ENCODE measurements at regions of chr12 and their contacts with region 1.

Region 1: DNA sequence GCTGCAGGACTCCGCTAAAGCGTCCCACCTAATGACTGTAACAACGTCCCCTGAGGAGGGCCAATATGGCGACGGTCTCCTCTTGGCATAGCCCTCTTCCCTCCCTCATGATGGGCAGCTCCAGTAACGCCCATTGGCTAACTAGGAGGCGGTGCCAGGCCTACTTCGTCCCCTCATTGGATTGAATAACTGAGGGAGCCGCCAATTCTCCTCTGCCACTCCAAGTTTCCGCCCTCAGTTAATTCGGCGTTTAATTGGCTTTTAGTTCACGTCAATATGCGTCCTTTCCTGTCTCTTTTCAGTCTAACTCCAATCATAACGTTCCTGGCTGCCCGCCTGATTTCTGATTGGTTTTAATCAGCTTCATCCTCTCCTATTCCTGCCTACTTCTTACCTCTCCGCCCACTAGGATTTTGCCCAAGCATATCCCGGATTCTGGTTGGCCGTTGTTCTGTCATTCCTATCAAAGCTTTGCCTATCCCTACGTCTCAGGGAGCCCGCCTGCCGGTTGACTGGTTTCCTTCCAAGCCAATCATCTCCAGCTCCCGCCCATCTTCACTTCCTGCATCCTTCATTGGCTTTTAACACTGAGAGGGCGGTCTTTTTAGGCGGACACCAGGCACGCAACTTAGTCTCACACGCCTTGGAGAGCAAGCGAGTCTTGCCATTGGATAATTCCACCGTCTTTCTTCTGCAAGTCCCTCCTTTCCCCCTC is 430 bp upstream of the SP1 start:
- DNase-seq: peak; percentile 80
- ATAC-seq: peak; percentile 78
- H3K4me3 Mint-ChIP-seq: no peak overlapping the region
- H3K27ac Mint-ChIP-seq: no peak overlapping the region
- H3K4me1 Mint-ChIP-seq: peaks cover 30% of the 10 kb centered on the region
- H3K27me3 Mint-ChIP-seq: no peaks in the 10 kb centered on the region

Region 2: GRCh38 chr12:53321074-53321814 is 58.3 kb before region 1 on chr12 and contains the start of gene AAAS:
- POLR2A ChIA-PET with region 1: interaction called, 16 read pairs
- DNase-seq: peak; percentile 95
- ATAC-seq: peak; percentile 82
- H3K4me3 Mint-ChIP-seq: peak within 1 kb of the TSS; percentile 100
- H3K27ac Mint-ChIP-seq: peak within 1 kb of the TSS; percentile 99
- H3K4me1 Mint-ChIP-seq: peaks cover 22% of the 10 kb centered on the region
- H3K27me3 Mint-ChIP-seq: peaks cover 3% of the 10 kb centered on the region
- total RNA-seq, gene AAAS: 65.0 to 67.0 TPM

Region 3: DNA sequence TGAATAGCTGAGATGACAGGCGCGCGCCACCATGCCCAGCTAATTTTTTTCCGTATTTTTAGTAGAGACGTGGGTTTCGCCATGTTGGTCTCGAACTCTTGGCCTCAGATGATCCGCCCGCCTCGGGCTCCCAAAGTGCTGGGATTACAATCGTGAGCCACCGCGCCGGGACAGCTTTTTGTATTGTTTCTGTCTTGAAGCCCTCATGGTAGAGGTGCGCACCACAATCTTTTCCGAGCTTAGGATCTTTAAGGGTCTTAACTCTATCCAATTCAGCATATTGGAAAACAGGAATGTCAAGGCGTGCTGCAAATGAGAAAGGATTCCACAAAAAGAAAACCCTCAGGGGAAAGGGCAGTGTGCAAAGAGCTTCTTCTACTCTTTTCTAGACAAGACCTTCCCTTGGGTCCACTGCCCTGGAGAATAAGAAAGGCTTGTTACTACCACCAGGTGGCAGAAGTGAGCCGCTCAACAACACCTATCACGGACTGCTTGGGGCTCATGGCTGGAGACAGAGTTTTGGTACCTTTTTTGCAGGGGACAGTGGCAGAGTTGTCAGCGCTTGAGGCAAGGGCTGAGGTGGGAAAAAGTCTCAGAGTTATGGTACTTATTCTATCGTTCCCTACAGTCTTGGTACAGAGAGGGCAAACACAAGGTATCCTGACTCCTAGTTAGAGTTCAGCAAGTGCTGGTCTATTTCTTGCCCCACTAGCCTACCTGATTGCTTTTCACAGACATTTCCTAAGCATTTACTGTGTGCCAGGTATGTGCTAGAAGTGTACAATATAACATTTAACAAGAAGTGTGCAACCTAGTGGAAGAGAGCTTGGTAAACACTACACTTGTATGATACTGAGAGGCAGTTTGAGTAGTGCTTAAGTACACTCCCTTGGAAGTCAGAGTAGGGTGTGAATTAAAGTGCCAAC is 27.0 kb before region 1 on chr12:
- POLR2A ChIA-PET with region 1: interaction called, 15 read pairs
- DNase-seq: peak; percentile 73
- ATAC-seq: peak; percentile 99
- H3K4me3 Mint-ChIP-seq: no peak overlapping the region
- H3K27ac Mint-ChIP-seq: peak overlapping the region; percentile 64
- H3K4me1 Mint-ChIP-seq: peaks cover 11% of the 10 kb centered on the region
- H3K27me3 Mint-ChIP-seq: no peaks in the 10 kb centered on the region

Region 4: DNA sequence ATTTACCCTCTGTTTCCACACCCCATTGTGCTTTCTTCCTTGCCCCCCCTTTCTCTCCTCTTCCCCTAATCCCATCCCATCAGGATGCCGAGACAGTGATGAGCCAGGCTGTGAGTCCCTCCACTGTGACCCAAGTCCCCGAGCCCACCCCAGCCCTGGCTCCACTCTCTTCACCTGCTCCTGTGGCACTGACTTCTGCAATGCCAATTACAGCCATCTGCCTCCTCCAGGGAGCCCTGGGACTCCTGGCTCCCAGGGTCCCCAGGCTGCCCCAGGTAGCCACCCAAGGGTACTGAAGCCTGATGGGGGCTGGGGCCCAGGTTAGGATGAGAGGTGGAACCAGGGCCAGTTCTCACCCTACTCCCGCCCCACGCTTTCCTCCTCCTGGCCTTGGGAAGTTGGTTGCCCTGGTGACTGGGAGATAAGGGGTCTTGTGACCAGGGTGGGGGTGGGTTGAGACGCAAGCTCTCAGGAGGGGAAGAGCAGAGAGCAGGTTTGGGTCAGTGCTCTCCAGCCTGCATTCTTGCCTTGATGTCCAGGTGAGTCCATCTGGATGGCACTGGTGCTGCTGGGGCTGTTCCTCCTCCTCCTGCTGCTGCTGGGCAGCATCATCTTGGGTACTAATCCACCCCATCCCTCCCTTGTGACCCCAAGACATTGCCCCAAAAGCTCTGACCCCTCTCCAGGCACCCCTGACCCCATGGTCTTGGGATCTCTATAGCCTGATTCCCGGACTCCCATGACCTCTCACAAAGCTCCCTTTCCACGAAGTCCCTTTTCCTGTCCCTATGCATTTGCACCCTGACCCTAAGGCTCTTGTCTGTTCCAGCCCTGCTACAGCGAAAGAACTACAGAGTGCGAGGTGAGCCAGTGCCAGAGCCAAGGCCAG is 45.3 kb after region 1 on chr12:
- POLR2A ChIA-PET with region 1: interaction called, 11 read pairs
- DNase-seq: no peak
- ATAC-seq: no peak
- H3K4me3 Mint-ChIP-seq: no peak overlapping the region
- H3K27ac Mint-ChIP-seq: no peak overlapping the region
- H3K4me1 Mint-ChIP-seq: peaks cover 4% of the 10 kb centered on the region
- H3K27me3 Mint-ChIP-seq: no peaks in the 10 kb centered on the region

Region 5: GRCh38 chr12:53441040-53441833 is 61.7 kb after region 1 on chr12 and contains the start of gene PRR13:
- POLR2A ChIA-PET with region 1: interaction called, 10 read pairs
- DNase-seq: peak; percentile 95
- ATAC-seq: peak; percentile 99
- H3K4me3 Mint-ChIP-seq: peak within 1 kb of the TSS; percentile 99
- H3K27ac Mint-ChIP-seq: peak within 1 kb of the TSS; percentile 91
- H3K4me1 Mint-ChIP-seq: peaks cover 29% of the 10 kb centered on the region
- H3K27me3 Mint-ChIP-seq: no peaks in the 10 kb centered on the region
- total RNA-seq, gene PRR13: 218 to 231 TPM

Region 6: DNA sequence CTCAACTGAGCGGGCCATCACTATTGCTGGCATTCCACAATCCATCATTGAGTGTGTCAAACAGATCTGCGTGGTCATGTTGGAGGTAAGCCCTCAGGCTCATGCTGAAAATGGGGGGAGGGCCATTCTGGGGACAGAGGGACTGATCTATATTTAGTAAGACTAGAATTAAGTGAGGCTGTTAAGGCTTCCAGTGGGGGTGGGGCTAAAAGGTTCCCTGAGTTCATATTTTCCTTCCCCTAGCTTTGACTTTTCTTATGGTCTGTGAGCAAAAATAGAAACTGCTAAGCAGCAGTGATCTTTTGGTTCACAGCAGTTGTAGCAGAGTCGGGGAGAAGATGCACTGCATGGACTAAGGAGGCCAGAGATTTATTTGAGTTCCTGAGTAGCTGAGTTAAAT is 81.5 kb after region 1 on chr12:
- POLR2A ChIA-PET with region 1: no interaction called
- DNase-seq: no peak
- ATAC-seq: no peak
- H3K4me3 Mint-ChIP-seq: no peak overlapping the region
- H3K27ac Mint-ChIP-seq: peak overlapping the region; percentile 57
- H3K4me1 Mint-ChIP-seq: peaks cover 21% of the 10 kb centered on the region
- H3K27me3 Mint-ChIP-seq: no peaks in the 10 kb centered on the region

Region 7: GRCh38 chr12:53500776-53501614 is 121.4 kb after region 1 on chr12 and contains the start of gene TARBP2:
- POLR2A ChIA-PET with region 1: interaction called, 21 read pairs
- DNase-seq: peak; percentile 93
- ATAC-seq: peak; percentile 82
- H3K4me3 Mint-ChIP-seq: peak within 1 kb of the TSS; percentile 84
- H3K27ac Mint-ChIP-seq: peak within 1 kb of the TSS; percentile 90
- H3K4me1 Mint-ChIP-seq: peaks cover 21% of the 10 kb centered on the region
- H3K27me3 Mint-ChIP-seq: no peaks in the 10 kb centered on the region
- total RNA-seq, gene TARBP2: 32.3 to 34.9 TPM

Region 8: GRCh38 chr12:53613821-53614220 is 234.3 kb after region 1 on chr12:
- POLR2A ChIA-PET with region 1: no interaction called
- DNase-seq: no peak
- ATAC-seq: no peak
- H3K4me3 Mint-ChIP-seq: no peak overlapping the region
- H3K27ac Mint-ChIP-seq: no peak overlapping the region
- H3K4me1 Mint-ChIP-seq: peaks cover 16% of the 10 kb centered on the region
- H3K27me3 Mint-ChIP-seq: no peaks in the 10 kb centered on the region

Measured in activated naive CD8-positive, alpha-beta T cell treated with anti-CD3 and anti-CD28 coated beads, Interleukin-2, amount 10 ng/mL, durations not matched to agents 7 days and 5 days (primary cell).